Calu3 (cell line): ENCODE measurements at regions of chr4 and their contacts with region 1.

Region 1: DNA sequence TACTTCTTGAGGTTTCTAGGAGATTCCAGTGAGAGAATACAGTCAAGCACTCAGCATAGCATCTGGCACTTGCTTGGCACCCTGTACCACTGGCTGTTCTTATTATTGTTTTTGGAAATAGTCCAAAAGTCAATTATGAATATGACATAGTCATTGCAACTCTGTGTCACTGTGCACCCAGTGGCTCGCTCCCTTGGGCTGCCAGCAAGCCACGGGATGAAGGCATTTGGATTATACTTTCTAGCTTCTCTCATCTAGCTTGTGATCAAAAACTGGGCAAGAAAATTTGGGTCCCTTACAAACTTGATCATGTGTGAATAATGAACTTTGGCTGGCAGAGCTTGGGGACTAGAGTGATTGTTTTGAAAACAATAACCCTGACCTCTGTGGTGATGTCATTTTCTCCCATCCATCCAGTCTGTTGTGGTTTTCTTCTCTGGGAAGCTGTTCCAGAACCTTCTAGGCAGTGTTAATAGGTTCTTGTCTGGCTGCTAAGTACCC is 32.7 kb upstream of the LIMCH1 start:
- DNase-seq: peak; percentile 39
- H3K4me3 Mint-ChIP-seq: no peak overlapping the region
- H3K27ac Mint-ChIP-seq: peak overlapping the region; percentile 91
- H3K4me1 Mint-ChIP-seq: peaks cover 50% of the 10 kb centered on the region
- H3K27me3 Mint-ChIP-seq: no peaks in the 10 kb centered on the region
- CTCF ChIP-seq: no peak

Region 2: GRCh38 chr4:41177016-41177415 is 328.2 kb before region 1 on chr4:
- CTCF ChIA-PET with region 1: no interaction called
- intact Hi-C with region 1: no loop called
- DNase-seq: no peak
- H3K4me3 Mint-ChIP-seq: no peak overlapping the region
- H3K27ac Mint-ChIP-seq: no peak overlapping the region
- H3K4me1 Mint-ChIP-seq: peaks cover 16% of the 10 kb centered on the region
- H3K27me3 Mint-ChIP-seq: no peaks in the 10 kb centered on the region
- CTCF ChIP-seq: no peak

Region 3: DNA sequence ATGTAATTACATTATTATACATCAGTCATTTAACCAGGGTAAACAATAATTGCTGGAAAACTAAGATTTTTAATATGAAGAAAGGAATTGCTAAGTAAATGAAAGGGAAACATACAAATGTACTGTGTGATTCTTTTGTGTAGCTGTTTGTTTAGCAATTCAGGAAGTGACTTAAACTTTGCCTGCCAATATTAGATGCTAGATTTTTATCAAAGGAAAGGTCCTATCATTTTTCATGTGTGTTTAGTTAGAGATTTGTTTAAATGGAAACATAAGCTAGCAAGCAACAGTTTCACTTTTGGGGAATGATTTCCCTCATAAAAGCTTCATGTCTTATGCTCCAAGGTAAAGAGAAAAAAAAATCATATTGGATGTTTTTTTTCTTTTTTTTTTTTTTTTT is 62.4 kb before region 1 on chr4:
- CTCF ChIA-PET with region 1: interaction called, 3 read pairs
- intact Hi-C with region 1: loop called (anchors 2 kb)
- DNase-seq: no peak
- H3K4me3 Mint-ChIP-seq: peak overlapping the region; percentile 12
- H3K27ac Mint-ChIP-seq: no peak overlapping the region
- H3K4me1 Mint-ChIP-seq: peaks cover 14% of the 10 kb centered on the region
- H3K27me3 Mint-ChIP-seq: no peaks in the 10 kb centered on the region
- CTCF ChIP-seq: no peak

Region 4: DNA sequence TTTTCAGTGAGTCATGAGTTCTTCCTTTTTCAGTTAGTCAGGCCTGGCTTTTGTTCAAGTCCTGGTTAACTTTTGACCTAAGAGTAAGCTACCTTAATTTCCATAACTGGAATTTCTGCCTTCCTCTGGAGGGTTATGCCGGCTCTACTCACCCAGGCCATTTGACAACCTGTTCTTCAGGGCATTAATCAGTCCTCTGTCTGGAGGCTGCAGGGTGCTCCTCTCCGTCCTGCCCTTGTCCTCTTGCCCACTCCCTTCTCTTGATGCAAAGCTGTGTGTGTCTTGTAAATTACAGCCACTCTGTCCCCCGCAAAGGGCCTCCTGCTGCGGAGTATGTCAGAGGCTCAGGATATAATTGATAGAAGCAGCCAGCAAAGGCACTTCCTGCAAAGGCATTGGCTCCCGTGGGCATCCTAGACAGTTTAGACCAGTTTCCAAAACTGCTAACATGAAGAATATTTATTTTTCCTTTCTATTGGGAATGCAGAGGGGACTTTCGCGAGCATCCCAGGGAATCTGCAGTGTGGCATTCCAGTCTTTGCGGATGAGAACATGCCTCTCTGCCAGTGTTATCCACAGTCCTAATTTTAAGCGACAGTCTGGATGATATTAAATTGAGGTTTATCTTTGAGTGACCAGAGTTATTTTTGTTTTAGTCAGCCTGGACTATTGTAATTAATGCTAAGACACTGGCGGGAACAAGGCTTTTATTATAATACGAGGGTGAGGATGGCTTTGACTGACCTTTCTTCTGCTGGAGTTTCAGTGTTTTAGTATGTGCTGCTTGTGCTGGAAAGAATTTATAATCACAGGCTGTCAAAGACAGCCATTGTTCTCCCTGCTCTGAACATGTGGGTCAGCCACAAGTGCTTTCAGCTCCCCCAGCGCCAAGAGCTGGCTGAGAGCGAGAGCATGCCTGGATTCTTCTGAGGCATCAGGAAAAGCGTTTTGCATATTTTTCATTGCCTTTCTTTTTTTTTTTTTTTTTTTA is 107.0 kb after region 1 on chr4:
- CTCF ChIA-PET with region 1: no interaction called
- intact Hi-C with region 1: loop called (anchors 5 kb)
- DNase-seq: peak; percentile 55
- H3K4me3 Mint-ChIP-seq: peak overlapping the region; percentile 55
- H3K27ac Mint-ChIP-seq: peak overlapping the region; percentile 57
- H3K4me1 Mint-ChIP-seq: peaks cover 27% of the 10 kb centered on the region
- H3K27me3 Mint-ChIP-seq: no peaks in the 10 kb centered on the region
- CTCF ChIP-seq: no peak

Region 5: DNA sequence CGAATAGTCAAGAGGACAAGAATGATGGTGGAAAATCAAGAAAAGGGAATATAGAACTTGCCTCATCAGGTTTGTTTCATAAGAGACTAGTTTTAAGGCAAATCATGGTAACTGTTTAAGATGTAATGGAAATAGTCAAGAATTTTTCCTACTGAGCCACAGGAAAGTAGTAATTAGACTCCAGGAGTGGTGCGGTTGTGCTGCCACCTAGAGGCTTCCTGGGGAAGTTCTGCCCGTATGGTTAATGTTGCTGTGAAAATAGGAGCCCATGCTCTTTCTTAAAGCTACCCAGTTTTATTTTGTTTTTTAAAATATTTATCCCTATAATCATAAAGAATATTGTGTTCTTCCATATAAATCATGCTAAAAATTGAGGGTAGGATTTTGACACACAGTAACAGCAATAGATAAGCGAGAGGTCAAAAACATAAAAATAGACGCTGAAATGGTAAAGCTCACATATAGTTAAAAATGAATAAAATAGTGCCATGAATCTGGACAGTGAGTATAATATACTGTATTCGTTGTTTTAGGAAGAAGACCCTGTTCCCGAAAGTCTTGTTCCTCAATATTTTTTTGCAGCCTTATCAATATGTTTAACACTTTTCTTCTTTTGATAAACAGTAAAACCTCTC is 156.3 kb after region 1 on chr4:
- CTCF ChIA-PET with region 1: no interaction called
- intact Hi-C with region 1: loop called (anchors 5 kb)
- DNase-seq: peak; percentile 56
- H3K4me3 Mint-ChIP-seq: no peak overlapping the region
- H3K27ac Mint-ChIP-seq: no peak overlapping the region
- H3K4me1 Mint-ChIP-seq: peaks cover 11% of the 10 kb centered on the region
- H3K27me3 Mint-ChIP-seq: no peaks in the 10 kb centered on the region
- CTCF ChIP-seq: peak; percentile 63